CD4-positive, alpha-beta T cell (primary cell): ENCODE measurements at regions of chr12 and their contacts with region 1.

Region 1: DNA sequence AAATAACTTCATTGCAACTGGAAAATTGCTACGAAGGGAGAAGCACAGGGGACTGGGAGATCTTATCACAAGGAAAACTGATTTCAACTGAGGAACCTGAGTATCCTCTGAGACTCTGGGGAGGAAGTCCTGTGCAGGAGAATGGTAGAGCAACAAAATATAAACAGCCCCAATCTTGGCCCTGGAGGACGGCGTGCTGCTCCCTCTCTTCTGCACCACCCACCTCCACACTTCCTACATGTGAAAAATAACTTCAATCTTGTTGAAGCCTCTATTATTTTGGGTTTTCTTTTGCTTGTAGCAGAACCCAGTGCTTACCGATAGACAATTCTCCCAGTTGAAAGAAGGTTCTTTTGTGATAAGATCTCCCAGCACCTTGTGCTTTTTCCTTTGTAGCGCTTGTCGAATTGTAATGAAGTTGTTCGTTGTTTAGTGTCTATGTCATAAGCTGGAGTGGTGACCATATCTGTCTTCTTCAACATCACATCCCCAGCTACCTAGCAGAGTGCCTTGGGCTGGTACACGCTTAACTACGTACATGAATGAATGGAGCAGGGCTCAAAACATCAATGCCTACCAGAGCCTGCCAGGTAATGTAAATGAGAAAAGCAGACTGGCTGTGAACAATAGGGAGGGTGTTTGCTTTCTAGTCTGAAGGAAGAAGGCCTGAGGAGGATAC is 2.8 kb upstream of the CD4 start:
- DNase-seq: peak in 5 of 14 experiments; percentile 38 to 79 (median 67)
- ATAC-seq: peak; percentile 79
- H3K4me3 ChIP-seq: peak overlapping the region; percentile 19
- H3K4me3 Mint-ChIP-seq: peak overlapping the region; percentile 72
- H3K27ac ChIP-seq: peak overlapping the region; percentile 58 to 80
- H3K27ac Mint-ChIP-seq: peak overlapping the region; percentile 93
- H3K4me1 ChIP-seq: peaks cover 88% of the 10 kb centered on the region
- H3K4me1 Mint-ChIP-seq: peaks cover 73% of the 10 kb centered on the region
- H3K27me3 ChIP-seq: no peaks in the 10 kb centered on the region
- H3K27me3 Mint-ChIP-seq: no peaks in the 10 kb centered on the region
- CTCF ChIP-seq: no peak

Region 2: GRCh38 chr12:6345319-6346091 is 441.1 kb before region 1 on chr12:
- CTCF ChIA-PET with region 1: no interaction called
- POLR2A ChIA-PET with region 1: no interaction called
- intact Hi-C with region 1: no loop called
- DNase-seq: peak in 7 of 14 experiments; percentile 23 to 74 (median 48)
- ATAC-seq: peak; percentile 34
- H3K4me3 ChIP-seq: no peak overlapping the region
- H3K4me3 Mint-ChIP-seq: peak overlapping the region; percentile 60
- H3K27ac ChIP-seq: no peak overlapping the region
- H3K27ac Mint-ChIP-seq: peak overlapping the region; percentile 72
- H3K4me1 ChIP-seq: peaks cover 55% of the 10 kb centered on the region
- H3K4me1 Mint-ChIP-seq: peaks cover 56% of the 10 kb centered on the region
- H3K27me3 ChIP-seq: no peaks in the 10 kb centered on the region
- H3K27me3 Mint-ChIP-seq: no peaks in the 10 kb centered on the region
- CTCF ChIP-seq: no peak

Region 3: GRCh38 chr12:6547987-6548386 is 238.6 kb before region 1 on chr12:
- CTCF ChIA-PET with region 1: no interaction called
- POLR2A ChIA-PET with region 1: no interaction called
- intact Hi-C with region 1: no loop called
- DNase-seq: no peak
- ATAC-seq: no peak
- H3K4me3 ChIP-seq: no peak overlapping the region
- H3K4me3 Mint-ChIP-seq: no peak overlapping the region
- H3K27ac ChIP-seq: no peak overlapping the region
- H3K27ac Mint-ChIP-seq: no peak overlapping the region
- H3K4me1 ChIP-seq: peaks cover 37% of the 10 kb centered on the region
- H3K4me1 Mint-ChIP-seq: peaks cover 18% of the 10 kb centered on the region
- H3K27me3 ChIP-seq: no peaks in the 10 kb centered on the region
- H3K27me3 Mint-ChIP-seq: no peaks in the 10 kb centered on the region
- CTCF ChIP-seq: no peak

Region 4: GRCh38 chr12:6764011-6764828 is 22.3 kb before region 1 on chr12:
- CTCF ChIA-PET with region 1: interaction called, 12 read pairs
- POLR2A ChIA-PET with region 1: interaction called, 20 read pairs
- intact Hi-C with region 1: no loop called
- DNase-seq: peak in 7 of 14 experiments; percentile 25 to 82 (median 48)
- ATAC-seq: peak; percentile 83
- H3K4me3 ChIP-seq: peak overlapping the region; percentile 10
- H3K4me3 Mint-ChIP-seq: peak overlapping the region; percentile 65
- H3K27ac ChIP-seq: no peak overlapping the region
- H3K27ac Mint-ChIP-seq: no peak overlapping the region
- H3K4me1 ChIP-seq: peaks cover 34% of the 10 kb centered on the region
- H3K4me1 Mint-ChIP-seq: peaks cover 38% of the 10 kb centered on the region
- H3K27me3 ChIP-seq: peaks cover 22 to 31% of the 10 kb centered on the region in 2 experiments
- H3K27me3 Mint-ChIP-seq: peaks cover 46% of the 10 kb centered on the region
- CTCF ChIP-seq: no peak

Region 5: DNA sequence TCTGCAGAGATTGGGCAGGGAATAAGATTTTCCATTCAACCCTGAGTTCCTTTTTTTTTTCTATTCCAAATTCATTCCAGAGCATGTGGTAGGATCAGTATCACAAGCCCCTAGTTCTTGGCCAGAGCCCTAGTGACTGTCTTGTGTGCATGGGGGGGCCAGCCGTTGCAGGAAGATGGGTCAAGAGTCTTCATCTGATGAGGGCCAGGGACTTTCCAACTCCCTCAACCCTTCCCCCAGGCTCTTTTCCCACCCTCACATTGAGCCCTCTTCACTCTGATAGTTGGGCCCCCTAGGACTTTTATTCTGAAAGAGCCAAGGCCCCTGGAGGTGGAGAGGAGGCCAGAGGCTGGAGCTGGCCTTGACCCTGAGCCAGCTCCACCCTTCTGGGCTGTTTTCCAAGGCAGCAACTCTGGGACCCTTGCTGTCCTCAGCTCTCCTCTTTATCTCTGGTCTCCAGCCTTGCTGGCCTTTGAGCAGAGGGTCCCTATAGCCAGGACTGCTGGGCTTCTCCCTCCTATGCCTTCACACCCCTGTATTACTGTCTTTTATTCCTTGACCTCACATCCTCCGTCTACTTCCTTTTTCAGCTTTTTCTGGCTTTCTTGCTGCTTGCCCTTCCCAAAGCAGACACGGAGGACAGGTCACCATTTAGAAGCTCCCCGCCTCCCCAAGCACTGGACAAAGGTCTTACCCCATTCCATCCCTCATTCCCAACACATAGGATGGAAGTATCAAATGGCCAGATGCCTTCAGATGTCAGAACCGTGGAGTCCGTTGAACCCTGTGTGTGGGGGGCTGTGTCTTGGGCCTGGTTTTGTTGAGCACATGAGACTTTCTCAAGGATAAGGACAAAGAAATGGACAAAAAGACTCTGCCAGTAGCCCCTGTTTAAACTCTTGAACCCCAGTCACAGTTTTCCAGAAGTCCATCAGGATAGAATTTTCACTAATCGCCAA is 336.5 kb after region 1 on chr12:
- CTCF ChIA-PET with region 1: no interaction called
- POLR2A ChIA-PET with region 1: no interaction called
- intact Hi-C with region 1: no loop called
- DNase-seq: no peak
- ATAC-seq: no peak
- H3K4me3 ChIP-seq: no peak overlapping the region
- H3K4me3 Mint-ChIP-seq: no peak overlapping the region
- H3K27ac ChIP-seq: no peak overlapping the region
- H3K27ac Mint-ChIP-seq: no peak overlapping the region
- H3K4me1 ChIP-seq: no peaks in the 10 kb centered on the region
- H3K4me1 Mint-ChIP-seq: peaks cover 5% of the 10 kb centered on the region
- H3K27me3 ChIP-seq: no peaks in the 10 kb centered on the region
- H3K27me3 Mint-ChIP-seq: no peaks in the 10 kb centered on the region
- CTCF ChIP-seq: no peak